Head of caudate nucleus (tissue), 42 donors: ENCODE measurements at regions of chr5 and their contacts with region 1.

Region 1: GRCh38 chr5:148186248-148186996 is 16.4 kb upstream of the SPINK6 start:
- DNase-seq: no peak

Region 2: GRCh38 chr5:148364343-148364742 is 177.9 kb after region 1 on chr5:
- intact Hi-C with region 1: loop called (anchors 10 kb)
- DNase-seq: no peak